Right ventricle myocardium superior (tissue), 1 donor: ENCODE measurements at regions of chr18 and their contacts with region 1.

Region 1: DNA sequence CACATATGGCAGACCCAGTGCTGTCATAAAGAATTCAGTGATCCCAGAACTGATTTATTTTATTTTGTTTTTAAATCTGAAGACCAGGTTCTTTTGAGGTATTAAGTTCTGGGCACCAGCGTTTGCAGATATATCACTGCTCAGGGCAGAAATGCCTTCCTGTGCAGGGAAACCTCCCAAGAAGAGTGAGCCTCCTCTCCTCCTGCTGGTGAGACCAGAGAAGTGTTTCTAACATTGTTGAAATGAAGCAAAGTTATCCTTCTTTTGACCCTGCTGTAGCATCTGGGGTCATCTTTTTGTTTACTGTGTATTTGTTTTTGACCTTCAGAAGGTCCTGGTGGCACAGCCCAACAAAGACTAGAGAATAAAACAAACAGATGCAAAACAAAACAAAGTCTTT is 94.0 kb downstream of the AQP4 start:
- DNase-seq: no peak
- ATAC-seq: peak; percentile 85

Region 2: DNA sequence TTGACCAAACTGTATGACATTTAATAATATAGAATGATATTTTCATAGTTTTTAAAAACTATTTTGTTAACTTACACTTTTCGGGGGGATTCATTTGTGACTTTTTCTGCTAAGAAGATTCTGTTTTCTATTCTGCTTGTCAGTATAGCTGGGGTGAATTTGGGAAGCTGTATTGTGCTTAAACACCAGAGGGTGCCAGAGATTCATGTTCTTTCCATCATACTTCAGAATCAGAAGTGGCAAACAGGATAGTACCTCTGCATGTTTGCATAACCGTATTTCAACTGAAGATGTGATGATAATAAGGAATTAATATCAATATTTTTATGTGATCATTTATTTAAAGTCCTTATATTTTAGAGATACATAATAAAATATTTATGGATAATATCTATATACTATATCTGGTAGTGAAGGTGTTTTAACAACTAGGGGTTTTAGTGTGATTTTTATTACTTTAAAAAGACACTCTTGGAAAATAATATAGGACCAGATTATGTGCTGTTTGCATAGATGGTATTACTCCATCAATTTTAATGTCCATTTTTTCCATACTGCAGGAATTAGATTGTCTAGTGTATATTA is 464.2 kb before region 1 on chr18:
- intact Hi-C with region 1: loop called (anchors 10 kb)
- DNase-seq: no peak
- ATAC-seq: peak; percentile 73

Region 3: DNA sequence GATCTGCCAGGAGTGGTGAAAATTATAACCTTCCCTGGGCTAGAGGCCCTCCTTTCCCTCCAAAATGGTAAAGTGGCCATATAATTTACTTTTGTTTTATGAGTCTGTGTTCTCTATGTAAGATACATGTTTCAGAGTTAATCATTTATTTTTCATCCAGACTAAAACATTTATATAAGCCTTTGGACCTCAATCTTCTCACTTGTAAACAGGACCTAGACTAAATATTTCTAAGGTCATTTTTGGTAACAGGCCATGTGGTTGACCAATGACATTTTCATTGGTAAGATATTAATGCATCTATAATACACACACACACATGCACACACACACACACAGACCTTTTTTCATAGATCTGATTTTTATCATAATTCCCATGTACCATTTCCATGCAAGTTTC is 143.5 kb before region 1 on chr18:
- intact Hi-C with region 1: loop called (anchors 5 kb)
- DNase-seq: no peak
- ATAC-seq: no peak